Dendritic cell treated with granulocyte-macrophage colony-stimulating factor and Interleukin-4, amounts not matched to agents 40 ng/mL and 50 ng/mL, for 4 days (primary cell): ENCODE measurements at regions of chr5 and their contacts with region 1.

Region 1: DNA sequence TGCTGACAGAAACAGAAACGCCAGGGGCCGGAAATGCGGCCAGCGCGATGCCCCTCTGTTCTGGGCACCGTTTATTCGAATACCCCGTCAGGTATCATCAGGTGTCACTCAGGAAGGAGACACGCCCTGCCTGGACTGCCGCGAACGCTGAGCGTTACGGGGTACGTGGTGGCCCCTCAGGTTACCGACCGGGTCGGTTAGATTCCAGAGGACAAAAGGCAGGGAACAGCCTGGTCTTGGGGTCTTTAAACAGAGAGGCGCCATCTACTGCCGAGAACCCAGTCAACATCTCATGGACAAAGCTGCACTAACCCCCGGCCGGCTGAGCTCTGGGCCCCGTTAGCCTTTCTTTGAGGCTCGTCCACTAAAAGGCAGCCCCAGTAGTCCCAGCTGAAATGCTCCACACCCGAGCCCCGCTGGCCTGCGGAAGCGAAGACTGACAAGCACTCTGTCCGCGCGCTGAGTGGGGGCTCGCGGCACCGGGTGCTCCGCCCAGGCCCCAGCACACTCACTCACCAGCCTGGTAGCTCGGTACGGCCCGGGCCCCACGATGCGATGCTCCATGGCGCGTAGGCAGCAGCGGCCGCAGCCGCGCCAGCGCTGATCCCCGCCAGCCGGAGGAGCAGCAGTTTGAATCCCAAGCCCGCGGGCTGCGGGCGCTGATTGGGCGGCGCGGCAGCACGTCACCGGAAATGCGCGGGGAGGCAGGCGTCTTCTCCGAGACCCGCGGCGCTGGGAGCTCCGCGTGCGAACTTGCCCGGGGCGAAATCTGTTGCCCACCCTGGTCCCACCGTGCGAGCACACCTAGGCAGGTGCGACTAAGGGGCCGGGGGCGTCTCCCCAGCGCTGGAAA is at the start of gene DEPDC1B:
- H3K4me3 Mint-ChIP-seq: peak within 1 kb of the TSS; percentile 95
- H3K27ac Mint-ChIP-seq: peak within 1 kb of the TSS; percentile 89
- H3K4me1 Mint-ChIP-seq: peaks cover 27% of the 10 kb centered on the region
- H3K27me3 Mint-ChIP-seq: peaks cover 7% of the 10 kb centered on the region

Region 2: GRCh38 chr5:60660038-60660437 is 39.7 kb before region 1 on chr5:
- intact Hi-C with region 1: no loop called
- H3K4me3 Mint-ChIP-seq: no peak overlapping the region
- H3K27ac Mint-ChIP-seq: no peak overlapping the region
- H3K4me1 Mint-ChIP-seq: no peaks in the 10 kb centered on the region
- H3K27me3 Mint-ChIP-seq: no peaks in the 10 kb centered on the region

Region 3: GRCh38 chr5:60826653-60827052 is 126.9 kb after region 1 on chr5:
- intact Hi-C with region 1: loop called (anchors 5 kb)
- H3K4me3 Mint-ChIP-seq: no peak overlapping the region
- H3K27ac Mint-ChIP-seq: peak overlapping the region; percentile 65
- H3K4me1 Mint-ChIP-seq: peaks cover 10% of the 10 kb centered on the region
- H3K27me3 Mint-ChIP-seq: no peaks in the 10 kb centered on the region

Region 4: DNA sequence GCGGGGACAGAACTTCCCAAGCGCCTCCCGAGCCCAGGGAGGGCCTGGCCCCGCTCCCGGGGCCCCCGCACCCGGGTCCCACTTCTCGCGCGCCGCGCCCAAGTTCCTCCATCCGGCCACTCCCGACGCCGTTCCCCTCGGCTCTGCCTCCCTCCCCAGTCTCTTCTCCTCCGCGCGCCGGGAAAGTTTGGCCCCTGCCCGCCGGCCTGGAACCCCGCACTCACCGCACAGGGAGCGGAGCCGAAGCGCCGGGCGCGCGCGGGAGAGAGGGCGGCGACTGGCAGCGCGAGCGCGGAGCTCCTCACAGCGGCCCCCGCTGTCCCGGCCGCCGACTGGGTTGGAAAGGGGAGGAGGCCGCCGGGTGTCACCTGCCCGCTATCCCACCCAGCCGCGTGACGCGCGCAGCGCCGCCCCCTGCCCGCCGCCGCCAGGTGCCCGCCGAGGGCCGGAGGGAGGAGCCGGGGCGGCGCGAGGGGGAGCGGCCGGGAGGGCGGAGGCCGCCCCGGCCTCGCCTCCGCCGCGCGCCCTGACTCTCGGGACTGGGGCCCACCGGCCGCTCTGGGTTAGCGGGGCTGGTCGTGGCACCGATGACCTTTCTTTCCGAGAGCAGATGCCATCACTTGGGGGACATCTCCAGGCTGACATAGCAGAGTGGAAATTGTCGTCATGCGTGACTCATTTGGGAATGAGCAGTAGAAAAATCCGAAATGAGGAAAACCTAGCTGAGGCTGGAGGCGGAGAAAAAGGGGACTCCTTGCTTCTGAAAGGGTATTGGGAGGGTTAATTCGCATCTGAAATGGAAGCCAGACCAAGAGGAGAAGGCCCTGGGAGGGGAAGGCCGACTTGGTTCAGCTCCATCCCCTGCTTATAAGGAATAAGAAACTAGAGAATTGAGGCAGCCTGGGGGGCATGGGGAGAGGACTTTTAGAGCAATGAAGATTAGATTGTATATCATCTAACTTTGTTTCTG is 144.5 kb after region 1 on chr5 and contains the start of gene ELOVL7:
- intact Hi-C with region 1: loop called (anchors 5 kb)
- H3K4me3 Mint-ChIP-seq: peak within 1 kb of the TSS; percentile 91
- H3K27ac Mint-ChIP-seq: peak within 1 kb of the TSS; percentile 75
- H3K4me1 Mint-ChIP-seq: peaks cover 21% of the 10 kb centered on the region
- H3K27me3 Mint-ChIP-seq: peaks cover 54% of the 10 kb centered on the region

Region 5: GRCh38 chr5:60944904-60945812 is 245.4 kb after region 1 on chr5 and contains the starts of genes ERCC8 and NDUFAF2:
- intact Hi-C with region 1: loop called (anchors 2 kb)
- H3K4me3 Mint-ChIP-seq: no peak within 1 kb of the TSS
- H3K27ac Mint-ChIP-seq: no peak within 1 kb of the TSS
- H3K4me1 Mint-ChIP-seq: peaks cover 7% of the 10 kb centered on the region
- H3K27me3 Mint-ChIP-seq: no peaks in the 10 kb centered on the region

Region 6: GRCh38 chr5:61625681-61626621 is 926.2 kb after region 1 on chr5:
- intact Hi-C with region 1: loop called (anchors 10 kb)
- H3K4me3 Mint-ChIP-seq: peak overlapping the region; percentile 79
- H3K27ac Mint-ChIP-seq: peak overlapping the region; percentile 77
- H3K4me1 Mint-ChIP-seq: peaks cover 39% of the 10 kb centered on the region
- H3K27me3 Mint-ChIP-seq: peaks cover 15% of the 10 kb centered on the region